Right cardiac atrium (tissue), 5 donors: ENCODE measurements at regions of chr17 and their contacts with region 1.

Region 1: GRCh38 chr17:8189711-8190477 is at the start of gene BORCS6:
- DNase-seq: peak; percentile 98 to 99 (median 99)
- ATAC-seq: peak; percentile 78 to 80
- H3K4me3 ChIP-seq: peak within 1 kb of the TSS; percentile 71
- H3K27ac ChIP-seq: peak within 1 kb of the TSS; percentile 98
- H3K4me1 ChIP-seq: peaks cover 9% of the 10 kb centered on the region
- H3K27me3 ChIP-seq: no peaks in the 10 kb centered on the region
- total RNA-seq, gene BORCS6: 7.0 to 9.9 (median 9.6) TPM

Region 2: DNA sequence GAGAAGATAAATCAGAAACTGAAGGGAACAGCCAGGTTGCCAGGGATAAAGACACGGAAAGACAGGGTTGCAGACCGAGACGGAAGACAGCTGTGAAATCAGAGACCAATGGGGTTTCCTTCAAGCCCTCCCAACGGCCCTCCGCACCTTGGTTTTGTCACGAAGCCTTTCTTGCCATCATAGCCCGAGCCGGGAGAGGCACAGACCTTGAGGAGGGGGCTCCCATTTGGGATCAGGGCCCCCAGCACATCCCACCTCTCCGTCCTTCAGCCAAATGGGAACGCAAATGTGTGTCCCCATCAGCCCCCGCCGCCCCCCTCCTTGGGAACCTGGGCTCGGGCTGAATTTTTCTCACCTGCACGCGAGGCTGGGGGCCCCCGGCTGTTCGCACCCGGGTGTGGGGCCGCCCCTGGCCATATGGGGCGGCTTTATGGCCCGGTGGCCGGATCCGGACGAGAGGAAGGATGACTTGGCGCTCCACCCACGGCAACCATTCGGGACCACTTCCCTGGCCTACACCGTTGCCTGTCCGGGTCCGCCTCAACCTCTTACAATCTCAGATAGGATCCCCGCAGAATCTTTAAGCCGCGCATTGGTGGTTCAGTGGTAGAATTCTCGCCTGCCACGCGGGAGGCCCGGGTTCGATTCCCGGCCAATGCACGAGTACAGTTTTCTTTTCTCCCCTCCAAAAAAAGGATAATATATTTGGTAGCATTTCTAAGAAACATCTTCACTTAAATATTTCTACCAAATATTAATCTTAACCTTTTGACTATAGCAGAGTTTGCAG is 64.5 kb before region 1 on chr17:
- intact Hi-C with region 1: loop called in 2 of 4 experiments (anchors 2 to 10 kb)
- DNase-seq: peak; percentile 66 to 88 (median 87)
- ATAC-seq: peak; percentile 49 to 54
- H3K4me3 ChIP-seq: peak overlapping the region; percentile 94
- H3K27ac ChIP-seq: no peak overlapping the region
- H3K4me1 ChIP-seq: peaks cover 5% of the 10 kb centered on the region
- H3K27me3 ChIP-seq: no peaks in the 10 kb centered on the region

Region 3: DNA sequence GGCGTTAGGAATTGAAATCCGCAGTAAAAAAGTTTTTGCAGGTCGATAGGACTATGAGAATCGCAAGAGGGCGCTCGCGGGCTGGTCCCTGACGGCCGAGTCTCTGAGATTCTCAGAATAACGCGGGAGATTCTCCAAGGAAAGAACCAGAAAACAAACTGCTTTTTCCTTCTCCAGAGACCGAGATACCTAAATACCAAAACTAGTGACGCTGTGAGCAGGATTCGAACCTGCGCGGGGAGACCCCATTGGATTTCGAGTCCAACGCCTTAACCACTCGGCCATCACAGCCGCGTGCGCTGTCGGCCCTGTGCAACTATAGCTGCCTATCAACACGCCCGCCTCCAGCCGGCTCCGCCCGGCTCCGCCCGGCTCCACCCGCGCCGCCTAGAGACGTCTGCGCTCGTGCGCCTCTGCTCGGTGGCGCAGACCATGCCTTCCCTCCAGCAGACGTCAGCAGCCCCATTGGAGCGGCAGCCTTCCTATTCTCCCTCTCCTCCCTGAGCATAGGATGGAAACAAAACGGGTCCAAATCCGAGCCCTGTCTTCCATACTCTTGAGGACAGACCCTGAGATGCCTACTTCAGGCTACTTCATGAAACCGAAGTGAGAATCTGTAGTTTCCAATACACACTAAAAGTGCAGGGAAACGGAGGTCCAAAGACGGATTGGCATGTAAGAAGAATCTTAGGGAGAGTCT is 51.1 kb before region 1 on chr17:
- intact Hi-C with region 1: no loop called
- DNase-seq: peak; percentile 93 to 98 (median 98)
- ATAC-seq: peak; percentile 93
- H3K4me3 ChIP-seq: no peak overlapping the region
- H3K27ac ChIP-seq: peak overlapping the region; percentile 87
- H3K4me1 ChIP-seq: no peaks in the 10 kb centered on the region
- H3K27me3 ChIP-seq: no peaks in the 10 kb centered on the region

Region 4: GRCh38 chr17:8222630-8223356 is 32.9 kb after region 1 on chr17:
- intact Hi-C with region 1: loop called in 3 of 4 experiments (anchors 2 kb)
- DNase-seq: peak; percentile 96 to 98 (median 98)
- ATAC-seq: peak; percentile 78 to 79
- H3K4me3 ChIP-seq: peak overlapping the region; percentile 73
- H3K27ac ChIP-seq: peak overlapping the region; percentile 99
- H3K4me1 ChIP-seq: peaks cover 5% of the 10 kb centered on the region
- H3K27me3 ChIP-seq: no peaks in the 10 kb centered on the region